ENCODE measurements at regions of chr11 and their contacts with region 1.

Region 1: DNA sequence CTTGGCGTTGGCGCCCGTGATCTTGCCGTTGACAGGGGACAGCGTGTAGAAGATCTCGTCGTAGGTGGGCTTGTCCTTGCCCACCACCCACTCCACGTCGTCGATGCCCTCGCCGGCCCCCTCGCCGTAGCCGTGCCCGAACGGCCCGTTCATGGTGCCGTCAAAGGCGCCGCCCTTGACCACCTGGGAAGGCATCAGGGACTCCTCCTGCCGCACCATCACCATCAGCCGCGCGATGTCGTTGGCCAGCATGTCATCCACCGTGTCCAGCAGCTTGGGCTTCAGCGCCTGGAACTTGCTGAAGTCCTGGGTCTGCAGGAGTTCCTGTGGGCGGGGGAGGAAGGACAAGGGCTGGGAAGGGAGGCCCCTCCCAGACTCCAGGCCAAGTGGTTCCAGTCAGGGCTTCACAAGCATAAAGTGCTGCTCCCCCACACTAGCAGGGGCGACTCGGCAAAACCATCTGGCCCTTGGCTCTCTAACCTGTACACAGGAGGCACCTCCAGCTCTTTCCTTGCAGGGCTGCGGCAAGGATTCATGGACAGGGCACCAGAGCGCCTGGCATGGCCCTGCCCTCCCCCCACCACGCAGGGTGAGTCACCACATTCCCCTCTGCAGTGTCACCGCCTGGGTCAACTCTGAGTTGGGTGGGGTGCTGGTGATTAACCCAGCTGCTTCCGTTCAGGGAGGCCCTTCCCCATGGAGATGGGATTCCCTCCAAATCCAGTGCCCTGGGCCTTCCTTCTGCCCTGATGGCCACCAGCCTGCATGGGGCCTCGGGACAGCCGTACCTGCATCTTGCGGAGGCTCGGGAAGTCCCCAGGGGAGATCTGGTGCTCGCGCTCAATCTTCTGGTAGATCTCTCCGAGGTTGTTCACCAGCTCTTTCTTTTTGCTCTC is 10.3 kb upstream of the CDC42BPG start:
- DNase-seq: peak; percentile 78 to 97
- H3K4me3 ChIP-seq: peak overlapping the region in 1 of 2 donors; percentile 21
- H3K27ac ChIP-seq: peak overlapping the region; percentile 88 to 95
- H3K4me1 ChIP-seq: peaks cover 37 to 61% of the 10 kb centered on the region in 2 donors
- H3K27me3 ChIP-seq: no peaks in the 10 kb centered on the region
- CTCF ChIP-seq: no peak

Region 2: GRCh38 chr11:64870176-64870892 is 15.6 kb after region 1 on chr11:
- intact Hi-C with region 1: loop called (anchors 2 kb)
- DNase-seq: peak in 1 of 2 donors; percentile 93
- H3K4me3 ChIP-seq: peak overlapping the region; percentile 35 to 38
- H3K27ac ChIP-seq: peak overlapping the region; percentile 97 to 98
- H3K4me1 ChIP-seq: peaks cover 51 to 81% of the 10 kb centered on the region in 2 donors
- H3K27me3 ChIP-seq: no peaks in the 10 kb centered on the region
- CTCF ChIP-seq: no peak

Region 3: DNA sequence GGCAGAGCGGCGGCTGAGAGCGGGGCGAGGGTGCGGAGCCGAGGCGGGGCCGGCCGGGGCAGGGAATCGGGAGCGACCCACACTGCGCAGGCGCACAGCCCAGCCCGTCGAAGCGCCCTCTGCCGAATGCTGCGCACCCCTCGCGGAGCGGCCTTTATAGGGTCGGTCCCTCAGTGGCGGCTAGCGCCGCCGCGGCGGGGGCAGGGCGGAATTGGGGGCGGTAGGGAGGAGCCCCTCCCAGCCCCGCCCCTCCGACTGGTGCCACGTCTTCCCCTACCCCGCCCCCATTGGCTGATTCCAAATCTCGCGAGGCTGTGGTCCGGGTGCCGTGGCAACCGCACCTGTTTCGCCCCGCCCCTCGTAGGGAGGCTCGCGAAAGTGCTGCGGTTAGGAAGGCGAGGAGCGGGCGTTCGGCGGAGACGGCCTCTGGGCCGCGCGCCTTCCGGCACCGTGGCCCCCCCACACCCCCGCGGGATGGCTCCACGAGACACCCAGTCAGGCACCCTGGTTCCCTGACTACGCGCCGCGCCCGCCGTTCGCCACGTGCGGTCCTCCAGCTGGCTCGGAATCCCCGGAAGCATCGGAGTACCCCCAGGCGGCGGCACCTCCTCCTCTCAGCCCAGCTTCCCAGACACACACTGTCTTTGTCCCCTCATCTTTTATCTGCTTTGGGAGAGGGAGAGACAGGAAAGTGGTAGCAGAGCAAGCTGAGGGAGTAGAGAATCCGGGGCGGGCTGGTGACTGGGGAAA is 23.9 kb after region 1 on chr11 and contains the start of gene EHD1:
- intact Hi-C with region 1: loop called (anchors 1 kb)
- DNase-seq: peak; percentile 91 to 99
- H3K4me3 ChIP-seq: peak within 1 kb of the TSS; percentile 67 to 93
- H3K27ac ChIP-seq: peak within 1 kb of the TSS; percentile 89 to 92
- H3K4me1 ChIP-seq: peaks cover 13 to 30% of the 10 kb centered on the region in 2 donors
- H3K27me3 ChIP-seq: no peaks in the 10 kb centered on the region
- CTCF ChIP-seq: peak; percentile 40 to 61 (median 56)
- total RNA-seq, gene EHD1: 216 TPM

Region 4: DNA sequence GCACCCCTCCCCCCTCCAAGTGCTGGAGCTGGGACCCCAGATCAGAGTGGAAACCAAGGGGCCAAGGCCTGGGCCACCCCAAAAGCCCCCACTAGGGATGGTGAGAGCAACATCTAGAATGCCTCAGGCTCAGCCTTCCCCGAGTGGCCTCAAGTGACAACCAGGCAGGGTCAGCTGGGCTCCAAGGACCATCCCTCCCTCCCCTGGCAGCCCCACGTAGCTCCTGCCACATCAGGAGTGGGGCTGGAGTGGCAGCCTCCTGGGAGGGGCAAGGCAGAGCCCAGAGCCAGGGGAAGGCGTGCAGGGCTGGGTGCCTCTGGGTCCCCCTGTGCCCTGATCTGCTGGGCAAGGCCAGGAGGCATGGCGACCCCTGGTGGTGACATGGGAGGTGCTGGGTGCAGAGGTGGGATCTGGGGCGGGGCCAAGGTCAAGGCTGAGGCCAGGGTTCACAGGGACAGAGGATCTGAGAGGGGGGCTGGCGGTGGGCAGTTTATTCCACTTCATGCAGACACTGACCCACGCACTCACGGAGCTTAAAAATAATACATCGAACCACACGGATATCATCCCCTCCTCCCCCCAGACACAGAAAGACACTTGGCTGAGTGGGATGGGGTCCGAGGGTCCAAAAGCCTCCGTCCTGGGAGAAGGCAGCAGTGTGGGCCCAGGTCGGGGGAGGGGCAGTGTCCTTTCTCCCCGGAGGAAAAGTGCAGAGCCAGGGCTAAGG is 39.5 kb after region 1 on chr11:
- intact Hi-C with region 1: no loop called
- DNase-seq: peak in 1 of 2 donors; percentile 92
- H3K4me3 ChIP-seq: no peak overlapping the region
- H3K27ac ChIP-seq: no peak overlapping the region
- H3K4me1 ChIP-seq: no peaks in the 10 kb centered on the region
- H3K27me3 ChIP-seq: no peaks in the 10 kb centered on the region
- CTCF ChIP-seq: peak; percentile 84 to 93 (median 93)

Region 5: GRCh38 chr11:64905516-64906313 is 50.9 kb after region 1 on chr11:
- intact Hi-C with region 1: no loop called
- DNase-seq: no peak
- H3K4me3 ChIP-seq: no peak overlapping the region
- H3K27ac ChIP-seq: no peak overlapping the region
- H3K4me1 ChIP-seq: no peaks in the 10 kb centered on the region
- H3K27me3 ChIP-seq: no peaks in the 10 kb centered on the region
- CTCF ChIP-seq: no peak

Region 6: DNA sequence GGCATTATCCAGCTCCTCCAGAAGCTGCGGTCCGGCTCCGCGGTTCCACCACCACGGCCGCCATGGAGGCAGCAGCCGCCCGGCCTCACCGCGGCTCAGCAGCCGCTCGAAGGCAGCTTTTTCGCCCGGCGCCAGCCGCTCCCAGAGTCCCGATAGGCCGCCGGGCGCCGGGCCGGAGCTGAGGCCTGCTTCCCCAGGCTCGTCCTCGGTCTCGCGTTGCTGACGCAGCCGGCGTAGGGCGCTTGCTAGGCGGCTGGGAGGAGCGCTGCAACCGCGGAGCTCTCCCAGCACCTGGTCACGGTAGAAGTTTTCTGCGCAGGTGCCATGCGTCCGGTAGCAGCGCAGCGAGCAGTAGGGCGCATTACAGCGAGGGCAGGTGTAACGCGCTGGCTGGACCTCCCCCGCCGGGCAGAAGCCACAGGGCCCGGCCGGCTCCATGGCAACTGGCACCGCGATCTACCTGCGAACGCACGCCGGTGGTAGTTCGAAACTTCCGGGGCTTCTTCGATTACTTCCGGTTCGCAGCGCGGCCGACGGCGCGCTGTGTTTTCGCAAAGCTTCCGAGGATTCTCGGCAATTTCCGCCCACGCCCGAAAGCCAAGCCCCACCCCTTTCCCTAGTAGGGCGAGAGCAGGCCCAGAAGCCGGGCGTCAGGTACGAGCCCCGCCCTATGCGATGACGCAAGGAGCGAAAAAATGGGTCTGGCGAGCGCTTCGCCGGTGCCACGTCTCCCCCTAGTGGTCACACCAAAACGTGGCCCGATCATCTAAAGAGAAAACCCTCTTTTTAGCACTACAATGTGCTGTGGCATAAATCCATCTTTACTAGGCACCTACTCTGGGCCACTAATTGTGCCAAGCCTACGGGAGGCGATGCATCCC is 262.7 kb after region 1 on chr11 and contains the start of gene ZNHIT2:
- intact Hi-C with region 1: loop called (anchors 10 kb)
- DNase-seq: peak; percentile 96 to 100
- H3K4me3 ChIP-seq: peak within 1 kb of the TSS; percentile 87 to 97
- H3K27ac ChIP-seq: peak within 1 kb of the TSS; percentile 71 to 93
- H3K4me1 ChIP-seq: peaks cover 27 to 33% of the 10 kb centered on the region in 2 donors
- H3K27me3 ChIP-seq: no peaks in the 10 kb centered on the region
- CTCF ChIP-seq: peak; percentile 92 to 97 (median 93)
- total RNA-seq, gene ZNHIT2: 35.3 TPM